ENCODE measurements at regions of chr5 and their contacts with region 1.

Region 1: DNA sequence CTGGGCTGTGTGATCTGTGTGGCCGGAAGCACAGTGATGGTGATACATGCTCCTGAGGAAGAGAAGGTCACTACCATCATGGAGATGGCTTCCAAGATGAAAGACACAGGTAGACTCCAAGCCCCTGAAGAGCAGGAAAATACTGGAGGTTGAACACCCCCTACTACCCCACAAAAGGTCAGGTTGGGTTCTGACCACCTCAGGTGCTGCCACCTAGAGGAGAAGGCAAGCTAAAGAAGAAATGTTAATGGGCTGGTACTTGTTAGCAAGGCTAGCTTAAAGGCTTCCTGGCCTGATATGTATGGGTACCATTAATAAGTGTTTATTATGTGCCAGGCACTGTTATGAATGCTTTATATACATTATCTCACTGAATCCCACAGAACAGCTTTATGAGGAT is 11.7 kb downstream of the NIPAL4 start:
- H3K4me3 Mint-ChIP-seq: no peak overlapping the region
- H3K27ac Mint-ChIP-seq: no peak overlapping the region
- H3K4me1 Mint-ChIP-seq: peaks cover 39% of the 10 kb centered on the region
- H3K27me3 Mint-ChIP-seq: no peaks in the 10 kb centered on the region

Region 2: DNA sequence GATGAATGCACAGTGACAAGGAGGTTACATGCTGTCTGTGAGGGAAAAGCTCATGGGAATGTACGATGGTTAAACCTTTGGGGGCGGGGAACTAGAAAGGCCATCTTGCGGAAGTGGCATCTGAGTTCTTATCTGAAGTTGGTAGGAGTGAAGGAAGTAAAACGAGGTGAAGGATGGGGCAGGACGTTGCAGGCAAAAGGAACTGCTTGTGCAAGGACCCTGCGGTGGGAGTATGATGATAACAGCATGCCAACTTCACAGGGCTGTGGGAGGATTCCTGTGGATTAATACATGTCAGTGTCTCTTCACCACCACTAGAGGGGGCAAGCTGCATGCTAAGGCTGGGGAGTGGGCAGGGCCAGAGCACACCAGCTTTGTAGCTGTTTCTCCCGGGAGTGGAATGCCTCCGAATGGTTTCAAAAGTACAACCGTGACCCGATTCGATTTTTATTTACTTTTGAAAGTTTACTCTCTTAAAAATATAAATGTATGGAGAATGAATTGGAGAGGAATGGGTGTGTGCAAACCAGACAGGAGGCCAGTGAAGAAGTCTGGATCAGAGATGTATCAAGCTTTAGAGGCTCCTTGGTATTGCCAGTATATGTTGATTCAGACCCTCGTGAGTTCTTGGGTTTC is 143.3 kb before region 1 on chr5:
- intact Hi-C with region 1: loop called (anchors 2 kb)
- H3K4me3 Mint-ChIP-seq: no peak overlapping the region
- H3K27ac Mint-ChIP-seq: no peak overlapping the region
- H3K4me1 Mint-ChIP-seq: peaks cover 6% of the 10 kb centered on the region
- H3K27me3 Mint-ChIP-seq: no peaks in the 10 kb centered on the region

Region 3: DNA sequence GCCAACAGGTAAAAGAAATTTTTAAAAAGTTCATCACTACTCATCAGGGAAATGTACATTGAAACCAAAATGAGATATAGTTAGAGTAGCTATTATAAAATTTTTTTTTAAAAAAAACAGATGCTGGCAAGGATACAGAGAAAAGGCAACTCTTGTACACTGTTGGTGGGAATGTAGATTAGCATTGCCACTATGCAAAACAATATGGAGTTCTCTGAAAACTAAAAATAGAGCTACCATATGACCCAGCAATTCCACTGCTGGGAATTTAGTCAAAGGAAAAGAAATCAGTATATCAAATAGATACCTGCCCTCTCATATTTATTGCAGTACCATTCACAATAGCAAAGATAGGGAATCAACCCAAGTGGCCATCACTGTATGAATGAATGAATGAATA is 55.9 kb before region 1 on chr5:
- intact Hi-C with region 1: no loop called
- H3K4me3 Mint-ChIP-seq: no peak overlapping the region
- H3K27ac Mint-ChIP-seq: no peak overlapping the region
- H3K4me1 Mint-ChIP-seq: no peaks in the 10 kb centered on the region
- H3K27me3 Mint-ChIP-seq: peaks cover 6% of the 10 kb centered on the region

Region 4: GRCh38 chr5:157528036-157528632 is 56.4 kb after region 1 on chr5:
- intact Hi-C with region 1: no loop called
- H3K4me3 Mint-ChIP-seq: no peak overlapping the region
- H3K27ac Mint-ChIP-seq: no peak overlapping the region
- H3K4me1 Mint-ChIP-seq: peaks cover 43% of the 10 kb centered on the region
- H3K27me3 Mint-ChIP-seq: peaks cover 2% of the 10 kb centered on the region